ENCODE measurements at regions of chr3 and their contacts with region 1.

Region 1: DNA sequence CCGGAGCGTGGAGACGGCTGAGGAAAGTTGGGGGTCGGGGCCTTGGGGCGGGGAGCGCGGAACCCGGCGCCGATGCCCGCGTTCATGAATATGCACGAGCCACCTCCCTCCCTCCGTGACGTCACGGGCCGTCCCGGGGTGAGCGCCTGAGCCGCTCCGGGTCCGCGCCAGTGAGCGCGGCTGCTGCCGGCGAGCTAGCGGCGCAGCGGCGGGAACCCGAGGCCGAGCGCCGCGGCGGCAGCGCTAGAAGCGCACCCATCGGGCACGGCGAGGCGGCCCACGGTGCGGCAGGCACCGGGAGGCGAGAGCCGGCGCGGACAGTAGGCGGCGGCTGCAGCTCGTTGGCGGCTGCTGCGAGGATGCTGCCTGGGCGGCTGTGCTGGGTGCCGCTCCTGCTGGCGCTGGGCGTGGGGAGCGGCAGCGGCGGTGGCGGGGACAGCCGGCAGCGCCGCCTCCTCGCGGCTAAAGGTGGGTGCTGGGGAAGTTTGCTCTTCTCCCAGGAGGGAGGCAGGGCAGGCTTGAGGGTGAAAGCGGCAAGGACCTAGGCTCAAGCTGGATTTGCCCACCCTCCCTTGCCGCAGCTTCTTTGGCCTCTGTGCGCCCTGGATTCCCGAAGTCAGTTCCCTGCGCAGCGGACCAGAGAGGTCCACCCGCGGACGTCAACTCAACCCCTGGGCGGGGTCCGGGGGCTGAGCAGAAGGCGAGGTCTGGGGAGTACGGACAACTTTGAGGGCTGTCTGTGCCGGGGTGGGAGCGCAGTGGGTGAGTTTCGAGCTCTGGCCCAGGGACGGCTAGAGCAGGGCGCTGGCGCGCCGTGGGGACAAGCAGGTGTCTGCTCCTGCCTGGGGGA is at the start of gene CLSTN2:
- DNase-seq: peak; percentile 92
- H3K4me3 ChIP-seq: peak within 1 kb of the TSS; percentile 32 to 50; a peak in 3 of 4 replicates
- H3K27ac ChIP-seq: peak within 1 kb of the TSS in 1 of 2 experiments; percentile 68; a peak in 2 of 4 replicates
- H3K4me1 ChIP-seq: peaks cover 0 to 16% of the 10 kb centered on the region in 2 experiments; a peak in 2 of 4 replicates
- H3K27me3 ChIP-seq: 0 out of 2 replicates have a peak, but pooled peaks cover 5% of the 10 kb centered on the region
- CTCF ChIP-seq: no peak
- EP300 ChIP-seq: no peak
- RAD21 ChIP-seq: no peak; the same call in 1 of the 2 replicates
- polyA plus RNA-seq, gene CLSTN2: 0.02 and 0.03 TPM in 2 replicates

Region 2: GRCh38 chr3:139427283-139427993 is 507.8 kb before region 1 on chr3:
- CTCF ChIA-PET with region 1: interaction called, 59 read pairs
- POLR2A ChIA-PET with region 1: no interaction called
- DNase-seq: peak; percentile 69
- H3K4me3 ChIP-seq: peak overlapping the region in 1 of 2 experiments; percentile 24; a peak in 1 of 4 replicates
- H3K27ac ChIP-seq: no peak overlapping the region
- H3K4me1 ChIP-seq: no peaks in the 10 kb centered on the region
- H3K27me3 ChIP-seq: no peaks in the 10 kb centered on the region
- CTCF ChIP-seq: peak; percentile 90
- EP300 ChIP-seq: no peak
- RAD21 ChIP-seq: peak; percentile 96

Region 3: GRCh38 chr3:139577909-139578308 is 357.3 kb before region 1 on chr3:
- CTCF ChIA-PET with region 1: interaction called, 13 read pairs
- POLR2A ChIA-PET with region 1: no interaction called
- DNase-seq: peak; percentile 37
- H3K4me3 ChIP-seq: no peak overlapping the region
- H3K27ac ChIP-seq: no peak overlapping the region
- H3K4me1 ChIP-seq: peaks cover 0 to 18% of the 10 kb centered on the region in 2 experiments; a peak in 2 of 4 replicates
- H3K27me3 ChIP-seq: no peaks in the 10 kb centered on the region
- CTCF ChIP-seq: no peak
- EP300 ChIP-seq: no peak
- RAD21 ChIP-seq: no peak

Region 4: GRCh38 chr3:139808201-139808600 is 127.0 kb before region 1 on chr3:
- CTCF ChIA-PET with region 1: no interaction called
- POLR2A ChIA-PET with region 1: no interaction called
- DNase-seq: no peak
- H3K4me3 ChIP-seq: no peak overlapping the region
- H3K27ac ChIP-seq: no peak overlapping the region
- H3K4me1 ChIP-seq: peaks cover 0 to 2% of the 10 kb centered on the region in 2 experiments; a peak in 1 of 4 replicates
- H3K27me3 ChIP-seq: no peaks in the 10 kb centered on the region
- CTCF ChIP-seq: no peak
- EP300 ChIP-seq: no peak
- RAD21 ChIP-seq: no peak

Region 5: DNA sequence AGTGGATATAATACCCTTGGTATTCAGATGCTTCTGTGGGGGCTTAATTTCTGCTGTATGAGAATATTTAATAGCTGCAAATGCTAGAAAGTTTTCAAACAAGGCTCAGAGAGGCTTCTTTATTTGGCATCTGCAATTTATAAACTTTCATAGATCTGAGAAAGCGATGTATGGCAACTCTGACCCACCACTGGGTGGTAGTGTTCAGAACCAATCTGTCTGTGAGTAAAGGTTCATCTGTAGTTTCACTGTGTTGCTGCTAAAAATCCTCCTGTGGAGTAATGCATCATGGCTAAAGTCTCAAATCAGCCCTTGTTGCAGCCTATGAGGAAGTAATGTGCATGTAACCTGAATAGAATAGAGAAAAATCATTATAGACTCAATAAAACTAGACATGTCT is 47.2 kb after region 1 on chr3:
- CTCF ChIA-PET with region 1: interaction called, 14 read pairs
- POLR2A ChIA-PET with region 1: no interaction called
- DNase-seq: peak; percentile 36
- H3K4me3 ChIP-seq: no peak overlapping the region
- H3K27ac ChIP-seq: no peak overlapping the region
- H3K4me1 ChIP-seq: peaks cover 0 to 8% of the 10 kb centered on the region in 2 experiments; a peak in 2 of 4 replicates
- H3K27me3 ChIP-seq: no peaks in the 10 kb centered on the region
- CTCF ChIP-seq: no peak
- EP300 ChIP-seq: no peak
- RAD21 ChIP-seq: peak; percentile 62

Region 6: DNA sequence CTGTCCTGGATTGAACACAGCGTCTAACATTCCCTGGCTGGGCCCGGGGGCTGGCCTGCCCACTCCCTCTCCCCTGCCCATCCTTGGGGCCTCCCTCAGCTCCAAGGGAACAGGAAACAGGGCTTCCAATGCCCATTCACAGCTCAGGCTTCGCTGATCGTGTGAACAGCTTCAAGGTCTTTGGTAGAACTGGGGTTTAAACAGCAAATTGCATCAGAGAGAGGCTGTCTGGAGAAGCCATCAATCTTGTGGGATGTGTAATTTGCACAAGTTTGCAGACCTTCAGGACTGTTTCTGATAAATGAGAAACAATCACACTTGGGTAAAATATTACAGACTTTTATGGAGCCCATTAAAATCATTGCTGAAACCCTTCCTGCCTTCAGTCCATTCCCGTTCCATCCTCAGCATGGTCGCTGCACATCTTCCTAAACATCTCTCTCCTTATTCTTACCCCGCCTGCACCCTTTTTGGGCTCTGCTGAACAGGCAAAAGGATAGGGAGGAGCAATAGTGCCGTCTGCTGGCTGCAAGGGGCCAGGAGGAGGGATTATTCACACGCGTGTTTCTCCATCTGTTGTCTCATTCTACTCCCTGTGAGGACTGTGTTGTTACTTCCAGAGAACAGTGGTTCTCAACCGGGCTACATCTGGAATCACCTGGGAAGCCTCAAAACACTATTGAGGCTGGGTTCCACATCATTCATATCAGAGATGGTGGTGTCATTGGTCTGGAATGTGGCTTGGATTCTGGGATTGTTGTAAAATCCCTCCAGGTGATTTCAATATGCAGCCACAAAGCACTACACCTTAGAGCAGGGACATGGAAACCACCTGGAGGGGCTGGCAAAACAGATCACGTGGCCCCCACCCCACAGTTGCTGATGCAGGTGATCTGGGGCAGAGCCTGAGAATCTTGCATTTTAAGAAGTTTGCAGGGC is 116.0 kb after region 1 on chr3:
- CTCF ChIA-PET with region 1: interaction called, 81 read pairs
- POLR2A ChIA-PET with region 1: no interaction called
- DNase-seq: peak; percentile 49
- H3K4me3 ChIP-seq: no peak overlapping the region
- H3K27ac ChIP-seq: no peak overlapping the region
- H3K4me1 ChIP-seq: peaks cover 0 to 13% of the 10 kb centered on the region in 2 experiments; a peak in 1 of 4 replicates
- H3K27me3 ChIP-seq: no peaks in the 10 kb centered on the region
- CTCF ChIP-seq: no peak
- EP300 ChIP-seq: no peak
- RAD21 ChIP-seq: peak; percentile 82

Region 7: GRCh38 chr3:140499114-140499757 is 564.0 kb after region 1 on chr3:
- CTCF ChIA-PET with region 1: interaction called, 20 read pairs
- POLR2A ChIA-PET with region 1: no interaction called
- DNase-seq: peak; percentile 19
- H3K4me3 ChIP-seq: no peak overlapping the region
- H3K27ac ChIP-seq: no peak overlapping the region
- H3K4me1 ChIP-seq: no peaks in the 10 kb centered on the region
- H3K27me3 ChIP-seq: no peaks in the 10 kb centered on the region
- CTCF ChIP-seq: no peak
- EP300 ChIP-seq: no peak
- RAD21 ChIP-seq: peak; percentile 79

Measured in SK-N-SH (cell line).